ENCODE measurements at regions of chr6 and their contacts with region 1.

Region 1: GRCh38 chr6:26103770-26104456 is 16.7 kb downstream of the HFE start:
- DNase-seq: peak; percentile 89
- H3K4me3 Mint-ChIP-seq: peak overlapping the region; percentile 76
- H3K27ac Mint-ChIP-seq: peak overlapping the region; percentile 95
- H3K4me1 Mint-ChIP-seq: peaks cover 19% of the 10 kb centered on the region
- H3K27me3 Mint-ChIP-seq: peaks cover 3% of the 10 kb centered on the region

Region 2: DNA sequence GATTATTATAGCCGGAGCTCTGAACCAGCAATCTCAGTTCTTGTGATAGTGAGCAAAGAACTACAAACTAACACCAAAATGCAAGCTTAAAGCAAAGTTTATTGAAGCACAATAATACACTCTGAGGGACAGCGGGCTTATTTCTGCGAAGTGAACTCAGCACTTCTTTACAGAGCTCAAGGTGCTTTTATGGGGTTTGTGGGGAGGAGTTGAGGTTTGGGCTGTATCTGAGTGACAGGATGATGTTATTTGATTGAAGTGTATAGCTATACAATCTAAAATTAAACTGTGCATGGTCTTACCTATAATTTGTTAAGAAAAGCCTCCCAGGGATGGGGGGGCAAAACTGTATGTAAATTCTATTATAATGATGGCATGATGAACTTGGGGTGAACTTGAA is 17.7 kb before region 1 on chr6:
- intact Hi-C with region 1: loop called (anchors 1 kb)
- DNase-seq: peak; percentile 18
- H3K4me3 Mint-ChIP-seq: no peak overlapping the region
- H3K27ac Mint-ChIP-seq: no peak overlapping the region
- H3K4me1 Mint-ChIP-seq: peaks cover 26% of the 10 kb centered on the region
- H3K27me3 Mint-ChIP-seq: peaks cover 3% of the 10 kb centered on the region

Measured in activated T-helper 2 cell treated with anti-CD3 and anti-CD28 coated beads, Interferon-gamma antibody, Interleukin-2, Interleukin-4, amounts not matched to agents 10 μg/mL and 5 μg/mL and 100 μg/mL, durations not matched to agents 14 hours and 24 hours and 36 hours (primary cell).